GM10248 (cell line): ENCODE measurements at regions of chr5 and their contacts with region 1.

Region 1: DNA sequence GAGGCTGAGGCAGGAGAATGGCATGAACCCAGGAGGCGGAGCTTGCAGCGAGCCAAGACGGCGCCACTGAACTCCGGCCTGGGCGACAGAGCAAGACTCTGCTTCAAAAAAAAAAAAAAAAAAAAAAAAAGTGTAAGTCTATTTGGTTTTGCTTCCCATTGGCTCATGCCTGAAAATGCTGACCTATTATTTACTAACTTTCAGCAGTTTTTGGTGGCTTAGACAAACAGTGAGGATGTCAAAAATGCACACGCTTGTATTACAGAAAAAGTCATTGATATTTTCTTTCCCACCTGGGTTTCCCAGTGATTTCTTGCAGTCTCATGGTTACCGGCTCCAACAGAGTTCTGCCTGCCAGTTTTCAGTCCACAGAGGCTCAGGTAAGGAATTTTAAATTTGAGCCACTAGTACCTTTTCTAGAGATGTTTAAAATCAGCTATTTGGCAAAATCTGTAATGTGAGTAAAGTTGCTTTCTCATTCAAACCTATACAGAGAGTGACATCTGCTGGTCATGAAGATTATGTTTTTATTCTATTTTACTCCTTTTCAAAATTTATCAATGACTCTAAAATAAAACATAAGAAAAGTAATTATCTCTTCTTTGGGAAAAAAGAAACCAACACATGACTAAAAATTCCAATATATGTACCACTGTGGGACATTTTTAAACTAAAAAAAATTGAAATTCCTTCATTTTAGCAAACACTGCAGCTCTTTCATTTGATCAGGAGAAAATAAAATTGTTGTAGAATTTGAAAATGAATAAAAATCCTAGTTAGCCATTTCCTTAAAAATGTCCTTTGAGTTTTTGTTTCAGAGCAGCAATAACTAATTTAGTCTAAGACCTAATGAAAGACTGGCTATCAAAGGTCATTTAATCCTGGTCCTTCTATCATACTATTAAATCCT is 8.8 kb downstream of the FAM200C start:
- DNase-seq: peak; percentile 32
- CTCF ChIP-seq: peak; percentile 41

Region 2: DNA sequence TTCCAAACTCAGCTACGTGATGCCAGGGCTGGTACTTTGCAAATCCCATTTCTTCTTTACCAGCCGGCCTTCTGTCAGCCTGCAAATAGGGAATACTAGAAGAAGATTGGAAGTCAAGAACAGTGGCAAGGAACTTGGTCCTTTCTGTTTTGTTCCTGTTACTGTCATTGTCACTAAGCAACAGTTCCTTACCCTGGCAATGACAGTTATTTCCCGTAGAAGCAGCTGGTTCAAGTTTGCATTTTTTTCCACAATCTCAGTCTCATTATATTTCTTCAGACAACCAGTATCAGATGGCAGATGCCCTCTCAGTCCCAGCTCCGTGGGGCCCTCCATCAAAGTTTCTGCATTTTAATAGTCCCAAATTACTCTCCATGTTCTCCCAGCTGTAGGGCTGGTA is 11.5 kb before region 1 on chr5:
- CTCF ChIA-PET with region 1: interaction called, 10 read pairs
- POLR2A ChIA-PET with region 1: no interaction called
- DNase-seq: no peak
- CTCF ChIP-seq: no peak

Region 3: GRCh38 chr5:160467555-160468362 is 76.7 kb after region 1 on chr5:
- CTCF ChIA-PET with region 1: no interaction called
- POLR2A ChIA-PET with region 1: interaction called, 11 read pairs
- DNase-seq: peak; percentile 86
- CTCF ChIP-seq: no peak